Endothelial cell of umbilical vein (primary cell): ENCODE measurements at regions of chr6 and their contacts with region 1.

Region 1: DNA sequence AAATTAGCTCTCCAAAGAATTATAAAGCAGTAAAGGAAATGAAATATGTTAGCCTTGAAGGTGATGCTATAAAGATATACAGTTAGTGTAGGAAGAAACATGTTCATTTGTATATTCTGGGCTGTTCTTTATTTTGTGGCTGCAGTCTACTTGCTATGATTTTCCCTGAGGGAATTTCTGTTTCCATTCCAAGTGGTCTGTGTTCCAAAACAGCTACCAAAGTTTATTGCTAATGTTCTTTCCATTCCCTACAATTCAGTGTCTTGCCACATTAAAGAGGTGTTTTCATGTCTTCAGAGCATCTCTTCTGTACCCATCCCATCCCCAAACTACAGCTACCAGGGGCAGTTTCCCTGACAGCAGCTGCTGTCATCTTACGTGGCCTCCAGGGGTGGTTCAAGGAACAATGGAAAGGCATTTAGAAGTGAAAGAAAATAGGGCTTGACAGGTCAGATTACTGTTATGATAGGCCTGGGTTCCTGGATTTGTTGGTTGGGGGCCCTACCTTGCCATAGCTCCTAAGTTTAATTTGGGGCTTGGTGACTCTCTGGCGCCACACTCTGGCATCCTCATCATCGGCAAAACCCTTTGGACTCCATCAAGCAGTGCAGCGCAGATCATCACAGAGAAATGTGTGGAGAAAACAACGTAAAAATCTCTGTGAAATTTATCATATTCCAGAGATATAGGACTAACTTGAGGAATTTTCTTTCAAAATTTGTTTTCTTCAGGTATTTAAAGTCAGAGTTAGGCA is 33.8 kb upstream of the AIG1 start:
- DNase-seq: peak; percentile 61
- H3K4me3 ChIP-seq: no peak overlapping the region
- H3K27ac ChIP-seq: no peak overlapping the region
- H3K4me1 ChIP-seq: no peaks in the 10 kb centered on the region
- H3K27me3 ChIP-seq: no peaks in the 10 kb centered on the region
- CTCF ChIP-seq: peak; percentile 66 to 72
- POLR2A ChIP-seq: no peak

Region 2: DNA sequence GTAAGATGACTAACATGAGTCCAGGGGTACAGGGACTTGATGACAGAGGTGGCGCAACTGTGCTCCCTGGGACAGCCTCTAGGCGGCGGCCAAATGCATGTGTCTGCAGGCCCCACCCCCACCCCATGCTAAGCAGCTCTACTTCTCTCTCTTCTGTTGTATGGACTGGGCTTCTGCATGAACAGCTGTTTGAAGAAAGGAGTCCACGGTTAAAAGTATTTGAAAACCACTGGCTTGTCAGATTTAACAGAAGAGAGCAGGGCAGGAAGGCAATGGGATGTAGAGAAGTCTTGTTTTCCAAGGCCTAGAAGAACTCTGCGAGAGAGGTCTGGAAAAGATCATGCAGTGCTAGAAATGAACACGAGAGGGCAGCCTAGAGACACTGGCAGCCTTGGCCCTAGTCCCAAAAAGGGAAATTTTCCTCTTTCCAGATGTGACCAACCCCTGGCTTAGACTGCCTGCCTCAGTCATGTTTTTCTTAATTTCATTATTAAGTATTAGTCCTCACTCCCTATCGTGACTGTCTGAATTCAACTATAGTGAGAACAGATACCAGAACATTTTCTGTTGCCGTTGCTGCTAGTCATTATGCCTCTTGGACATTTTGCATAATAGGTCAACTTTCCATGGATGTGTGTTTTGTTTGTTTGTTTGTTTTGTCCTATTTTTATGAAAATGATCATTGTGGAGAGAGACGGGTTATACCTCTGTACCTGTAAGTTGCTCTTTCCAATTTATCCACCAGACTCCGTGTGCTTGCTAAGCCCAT is 460.1 kb before region 1 on chr6:
- CTCF ChIA-PET with region 1: interaction called, 7 read pairs
- POLR2A ChIA-PET with region 1: no interaction called
- dilution Hi-C with region 1: no loop called
- intact Hi-C with region 1: loop called (anchors 1 kb)
- DNase-seq: peak; percentile 62
- H3K4me3 ChIP-seq: no peak overlapping the region
- H3K27ac ChIP-seq: no peak overlapping the region
- H3K4me1 ChIP-seq: no peaks in the 10 kb centered on the region
- H3K27me3 ChIP-seq: peaks cover 2 to 16% of the 10 kb centered on the region in 2 experiments
- CTCF ChIP-seq: peak; percentile 82 to 85
- POLR2A ChIP-seq: no peak

Region 3: GRCh38 chr6:142746524-142746923 is 280.3 kb before region 1 on chr6:
- CTCF ChIA-PET with region 1: interaction called, 34 read pairs
- POLR2A ChIA-PET with region 1: no interaction called
- dilution Hi-C with region 1: no loop called
- intact Hi-C with region 1: loop called (anchors 1 kb)
- DNase-seq: peak; percentile 55
- H3K4me3 ChIP-seq: no peak overlapping the region
- H3K27ac ChIP-seq: no peak overlapping the region
- H3K4me1 ChIP-seq: no peaks in the 10 kb centered on the region
- H3K27me3 ChIP-seq: no peaks in the 10 kb centered on the region
- CTCF ChIP-seq: peak; percentile 46 to 50
- POLR2A ChIP-seq: no peak

Region 4: GRCh38 chr6:142819603-142820337 is 207.1 kb before region 1 on chr6:
- CTCF ChIA-PET with region 1: interaction called, 12 read pairs
- POLR2A ChIA-PET with region 1: no interaction called
- dilution Hi-C with region 1: no loop called
- intact Hi-C with region 1: no loop called
- DNase-seq: peak; percentile 95
- H3K4me3 ChIP-seq: peak overlapping the region; percentile 16 to 71 (median 27)
- H3K27ac ChIP-seq: peak overlapping the region; percentile 93
- H3K4me1 ChIP-seq: peaks cover 16% of the 10 kb centered on the region
- H3K27me3 ChIP-seq: no peaks in the 10 kb centered on the region
- CTCF ChIP-seq: no peak
- POLR2A ChIP-seq: no peak

Region 5: DNA sequence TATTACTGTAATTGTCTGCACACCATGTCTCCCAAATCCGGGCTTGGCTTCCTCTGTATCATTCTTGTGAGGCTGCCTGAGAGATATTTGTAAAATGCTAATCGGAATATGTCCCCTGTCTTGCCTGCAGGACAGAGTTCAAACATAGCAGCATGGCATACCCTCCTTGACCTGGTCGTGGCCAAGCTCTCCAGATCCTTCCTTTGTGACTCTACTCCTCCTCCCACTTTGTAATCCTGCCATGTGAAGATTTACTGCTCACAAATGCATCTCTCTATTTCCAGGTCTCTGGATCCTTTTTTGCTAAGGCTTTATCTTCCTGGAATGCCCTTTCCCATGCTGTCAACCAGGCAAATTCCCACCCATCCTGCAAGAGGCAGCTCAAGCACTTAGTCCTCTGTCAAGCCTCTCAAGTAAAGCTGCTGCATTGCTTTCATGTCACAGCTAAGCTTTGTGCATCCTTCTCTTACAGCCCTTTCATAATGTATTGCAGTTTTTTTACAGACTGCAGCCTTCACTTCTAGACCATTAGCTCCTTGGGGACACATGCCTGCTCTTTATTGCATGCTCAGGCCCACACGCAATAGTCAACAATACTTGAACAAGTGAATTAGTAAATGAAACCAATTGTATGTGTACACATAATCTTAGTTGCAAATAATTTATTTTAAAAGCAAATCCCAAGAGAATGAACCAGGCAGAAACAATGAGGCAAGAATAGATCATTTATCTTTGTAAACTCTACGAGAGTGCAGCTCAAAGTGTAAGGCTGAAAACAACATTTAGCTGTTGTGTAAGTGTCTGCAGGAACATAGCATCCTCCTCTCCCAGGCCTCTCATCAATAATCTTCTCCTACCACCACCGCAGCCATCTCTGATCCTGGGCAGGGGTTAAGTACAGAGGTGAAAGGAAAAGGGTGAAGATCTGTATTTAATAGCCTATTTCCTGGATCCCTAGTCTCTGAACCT is 127.7 kb before region 1 on chr6:
- CTCF ChIA-PET with region 1: no interaction called
- POLR2A ChIA-PET with region 1: no interaction called
- dilution Hi-C with region 1: no loop called
- intact Hi-C with region 1: no loop called
- DNase-seq: no peak
- H3K4me3 ChIP-seq: no peak overlapping the region
- H3K27ac ChIP-seq: no peak overlapping the region
- H3K4me1 ChIP-seq: peaks cover 10% of the 10 kb centered on the region
- H3K27me3 ChIP-seq: no peaks in the 10 kb centered on the region
- CTCF ChIP-seq: no peak
- POLR2A ChIP-seq: no peak

Region 6: GRCh38 chr6:142960098-142960497 is 66.8 kb before region 1 on chr6:
- CTCF ChIA-PET with region 1: interaction called, 4 read pairs
- POLR2A ChIA-PET with region 1: no interaction called
- dilution Hi-C with region 1: no loop called
- intact Hi-C with region 1: loop called (anchors 5 kb)
- DNase-seq: peak; percentile 84
- H3K4me3 ChIP-seq: no peak overlapping the region
- H3K27ac ChIP-seq: peak overlapping the region; percentile 50
- H3K4me1 ChIP-seq: peaks cover 13% of the 10 kb centered on the region
- H3K27me3 ChIP-seq: no peaks in the 10 kb centered on the region
- CTCF ChIP-seq: no peak
- POLR2A ChIP-seq: no peak

Region 7: DNA sequence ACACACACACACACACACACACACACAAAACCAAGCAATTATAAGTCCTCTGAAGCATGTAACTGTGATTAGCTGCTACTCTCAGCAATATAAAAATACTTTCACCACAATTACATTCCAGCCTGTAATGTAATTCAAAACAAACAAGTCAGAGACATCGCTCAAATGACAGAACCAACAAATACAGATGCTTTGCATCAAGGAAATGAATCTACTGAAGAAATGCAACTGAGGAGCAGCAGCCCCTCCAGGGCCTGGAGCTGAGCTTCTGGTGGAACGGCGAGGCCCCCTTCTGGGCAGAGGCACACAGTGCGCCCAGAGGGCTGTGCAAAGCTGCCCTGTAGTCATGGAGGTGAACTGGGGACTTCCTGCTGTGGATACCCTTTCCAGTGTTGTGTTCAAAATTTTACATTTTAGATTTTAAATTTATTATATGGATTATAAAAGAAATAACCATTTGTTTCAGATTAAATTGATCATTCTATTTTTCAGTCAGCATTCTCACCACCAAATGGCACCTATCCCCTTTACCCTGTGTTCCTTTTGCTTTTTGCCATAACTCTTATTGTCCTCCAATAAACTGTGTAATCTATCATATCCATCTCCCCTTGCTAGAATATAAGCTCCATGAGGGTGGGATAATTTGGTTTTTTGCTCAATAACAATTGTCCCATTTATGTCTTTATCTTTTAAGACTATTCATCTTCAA is 400.4 kb after region 1 on chr6:
- CTCF ChIA-PET with region 1: interaction called, 25 read pairs
- POLR2A ChIA-PET with region 1: no interaction called
- dilution Hi-C with region 1: no loop called
- intact Hi-C with region 1: loop called (anchors 1 kb)
- DNase-seq: peak; percentile 66
- H3K4me3 ChIP-seq: no peak overlapping the region
- H3K27ac ChIP-seq: no peak overlapping the region
- H3K4me1 ChIP-seq: no peaks in the 10 kb centered on the region
- H3K27me3 ChIP-seq: no peaks in the 10 kb centered on the region
- CTCF ChIP-seq: peak; percentile 93 to 96
- POLR2A ChIP-seq: no peak